MCF 10A (cell line): ENCODE measurements at regions of chr3 and their contacts with region 1.

Region 1: GRCh38 chr3:113838631-113839209 is at the start of gene GRAMD1C:
- DNase-seq: peak; percentile 84
- H3K4me3 Mint-ChIP-seq: peak within 1 kb of the TSS; percentile 75
- H3K27ac Mint-ChIP-seq: peak within 1 kb of the TSS; percentile 54
- H3K4me1 Mint-ChIP-seq: peaks cover 6% of the 10 kb centered on the region
- H3K27me3 Mint-ChIP-seq: no peaks in the 10 kb centered on the region
- CTCF ChIP-seq: peak; percentile 91
- total RNA-seq, gene GRAMD1C: 0.64 and 0.79 TPM in 2 replicates

Region 2: DNA sequence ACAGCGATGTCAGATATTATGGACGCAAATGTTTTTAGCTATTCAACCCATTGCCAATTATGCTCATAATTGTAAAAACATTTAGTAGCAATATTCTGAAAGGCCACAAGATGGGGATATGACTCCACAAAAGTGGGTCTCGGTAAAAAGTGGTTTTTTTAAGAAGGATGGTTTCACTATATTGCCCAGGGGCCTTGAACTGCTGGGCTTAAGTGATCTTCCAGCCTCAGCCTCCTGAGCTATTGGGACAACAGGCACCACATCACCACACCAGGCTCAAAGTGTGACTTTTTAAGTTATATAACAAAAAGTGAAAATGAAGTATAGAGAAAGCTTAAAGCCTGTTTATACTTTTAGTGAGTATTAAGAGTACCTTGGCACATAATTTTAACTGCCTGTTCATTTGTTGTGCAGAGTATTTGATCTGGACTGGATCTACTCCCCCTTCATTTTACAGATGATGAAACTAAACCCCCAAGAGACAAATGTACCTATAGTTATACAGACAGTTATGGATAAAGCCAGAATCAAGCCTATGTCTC is 102.1 kb before region 1 on chr3:
- CTCF ChIA-PET with region 1: interaction called, 17 read pairs
- POLR2A ChIA-PET with region 1: no interaction called
- intact Hi-C with region 1: loop called (anchors 1 kb)
- DNase-seq: peak; percentile 68
- H3K4me3 Mint-ChIP-seq: no peak overlapping the region
- H3K27ac Mint-ChIP-seq: peak overlapping the region; percentile 59
- H3K4me1 Mint-ChIP-seq: peaks cover 52% of the 10 kb centered on the region
- H3K27me3 Mint-ChIP-seq: no peaks in the 10 kb centered on the region
- CTCF ChIP-seq: peak; percentile 57

Region 3: DNA sequence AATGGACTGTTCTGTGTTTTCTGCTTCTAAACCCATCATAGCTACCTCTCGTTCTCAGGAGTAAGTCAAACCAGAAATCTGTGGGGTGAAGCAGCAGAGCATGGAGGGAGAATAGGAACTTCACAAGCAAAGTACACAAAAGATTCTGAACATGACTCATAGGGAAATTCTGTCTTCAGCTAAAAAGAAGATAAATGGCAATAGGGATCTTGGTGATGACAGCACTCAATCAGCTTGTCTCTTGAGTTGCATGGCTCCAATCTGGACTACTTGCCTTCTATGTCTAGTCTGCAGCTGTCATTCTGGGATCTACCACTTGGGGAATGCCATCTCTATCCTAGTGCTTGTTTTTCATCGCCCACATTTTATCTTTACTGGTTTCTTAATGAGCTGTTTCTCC is 13.6 kb before region 1 on chr3:
- CTCF ChIA-PET with region 1: interaction called, 13 read pairs
- POLR2A ChIA-PET with region 1: no interaction called
- intact Hi-C with region 1: no loop called
- DNase-seq: peak; percentile 35
- H3K4me3 Mint-ChIP-seq: no peak overlapping the region
- H3K27ac Mint-ChIP-seq: no peak overlapping the region
- H3K4me1 Mint-ChIP-seq: peaks cover 8% of the 10 kb centered on the region
- H3K27me3 Mint-ChIP-seq: no peaks in the 10 kb centered on the region
- CTCF ChIP-seq: no peak

Region 4: DNA sequence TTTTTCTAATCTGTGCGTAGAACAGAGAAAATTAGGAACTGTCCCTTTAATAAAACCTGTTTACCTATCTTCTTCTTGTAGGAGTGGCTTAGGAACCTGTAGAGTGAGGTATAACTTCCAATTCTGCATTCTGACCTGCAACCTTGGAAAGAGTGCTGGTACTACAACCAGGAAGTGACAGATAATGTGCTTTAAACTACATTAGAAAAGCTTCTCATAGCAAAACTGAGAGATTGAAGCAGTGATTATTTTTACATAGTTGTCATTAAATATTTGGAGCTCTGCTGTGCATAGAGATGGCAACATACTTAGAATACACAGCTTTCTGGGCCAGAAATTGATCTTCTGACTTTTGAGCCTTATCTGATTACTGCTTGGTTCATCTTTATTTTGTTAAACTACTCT is 58.7 kb after region 1 on chr3:
- CTCF ChIA-PET with region 1: interaction called, 39 read pairs
- POLR2A ChIA-PET with region 1: interaction called, 10 read pairs
- intact Hi-C with region 1: no loop called
- DNase-seq: peak; percentile 33
- H3K4me3 Mint-ChIP-seq: peak overlapping the region; percentile 64
- H3K27ac Mint-ChIP-seq: no peak overlapping the region
- H3K4me1 Mint-ChIP-seq: peaks cover 14% of the 10 kb centered on the region
- H3K27me3 Mint-ChIP-seq: no peaks in the 10 kb centered on the region
- CTCF ChIP-seq: no peak

Region 5: DNA sequence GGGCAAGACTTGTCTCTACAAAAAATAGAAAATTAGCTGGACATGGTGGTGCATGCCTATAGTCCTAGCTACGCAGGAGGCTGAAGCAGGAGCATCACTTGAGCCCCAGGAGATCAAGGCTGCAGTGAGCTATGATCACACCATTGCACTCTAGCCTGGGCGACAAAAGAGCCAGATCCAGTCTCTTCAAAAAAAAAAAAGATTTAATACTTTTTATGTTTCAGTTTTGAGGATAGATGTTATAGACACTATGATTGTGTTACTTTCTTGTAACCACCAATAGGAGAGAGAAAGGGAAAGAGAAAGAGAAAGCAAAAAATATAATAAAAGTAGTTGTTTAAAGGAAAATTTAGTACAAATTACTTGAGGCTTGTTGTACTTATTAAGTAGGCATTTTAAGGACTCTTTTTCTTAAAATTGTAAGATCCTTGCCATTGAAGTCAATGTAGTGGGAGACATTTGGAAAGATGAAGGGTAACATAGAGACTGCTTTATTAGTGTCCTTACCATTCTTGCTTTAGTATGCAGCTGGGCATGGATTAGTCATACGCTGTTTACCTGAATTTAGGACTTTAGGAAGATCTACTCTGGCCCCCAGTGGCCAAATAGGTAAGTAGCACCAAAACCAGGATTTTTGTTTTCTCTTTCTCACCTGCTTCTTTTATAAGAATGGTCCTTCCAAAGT is 74.0 kb after region 1 on chr3:
- CTCF ChIA-PET with region 1: interaction called, 313 read pairs
- POLR2A ChIA-PET with region 1: interaction called, 10 read pairs
- intact Hi-C with region 1: loop called (anchors 1 kb)
- DNase-seq: peak; percentile 82
- H3K4me3 Mint-ChIP-seq: no peak overlapping the region
- H3K27ac Mint-ChIP-seq: no peak overlapping the region
- H3K4me1 Mint-ChIP-seq: no peaks in the 10 kb centered on the region
- H3K27me3 Mint-ChIP-seq: no peaks in the 10 kb centered on the region
- CTCF ChIP-seq: peak; percentile 63

Region 6: GRCh38 chr3:114056130-114057010 is 217.7 kb after region 1 on chr3 and contains the starts of genes CCDC191 and QTRT2:
- CTCF ChIA-PET with region 1: interaction called, 4 read pairs
- POLR2A ChIA-PET with region 1: no interaction called
- intact Hi-C with region 1: loop called (anchors 5 kb)
- DNase-seq: peak; percentile 99
- H3K4me3 Mint-ChIP-seq: peak within 1 kb of the TSS; percentile 99
- H3K27ac Mint-ChIP-seq: peak within 1 kb of the TSS; percentile 99
- H3K4me1 Mint-ChIP-seq: peaks cover 34% of the 10 kb centered on the region
- H3K27me3 Mint-ChIP-seq: no peaks in the 10 kb centered on the region
- CTCF ChIP-seq: no peak
- total RNA-seq, gene CCDC191: 3.8 and 5.2 TPM in 2 replicates
- total RNA-seq, gene QTRT2: 39.2 and 43.6 TPM in 2 replicates